CD4-positive, alpha-beta T cell (primary cell): ENCODE measurements at regions of chr2 and their contacts with region 1.

Region 1: DNA sequence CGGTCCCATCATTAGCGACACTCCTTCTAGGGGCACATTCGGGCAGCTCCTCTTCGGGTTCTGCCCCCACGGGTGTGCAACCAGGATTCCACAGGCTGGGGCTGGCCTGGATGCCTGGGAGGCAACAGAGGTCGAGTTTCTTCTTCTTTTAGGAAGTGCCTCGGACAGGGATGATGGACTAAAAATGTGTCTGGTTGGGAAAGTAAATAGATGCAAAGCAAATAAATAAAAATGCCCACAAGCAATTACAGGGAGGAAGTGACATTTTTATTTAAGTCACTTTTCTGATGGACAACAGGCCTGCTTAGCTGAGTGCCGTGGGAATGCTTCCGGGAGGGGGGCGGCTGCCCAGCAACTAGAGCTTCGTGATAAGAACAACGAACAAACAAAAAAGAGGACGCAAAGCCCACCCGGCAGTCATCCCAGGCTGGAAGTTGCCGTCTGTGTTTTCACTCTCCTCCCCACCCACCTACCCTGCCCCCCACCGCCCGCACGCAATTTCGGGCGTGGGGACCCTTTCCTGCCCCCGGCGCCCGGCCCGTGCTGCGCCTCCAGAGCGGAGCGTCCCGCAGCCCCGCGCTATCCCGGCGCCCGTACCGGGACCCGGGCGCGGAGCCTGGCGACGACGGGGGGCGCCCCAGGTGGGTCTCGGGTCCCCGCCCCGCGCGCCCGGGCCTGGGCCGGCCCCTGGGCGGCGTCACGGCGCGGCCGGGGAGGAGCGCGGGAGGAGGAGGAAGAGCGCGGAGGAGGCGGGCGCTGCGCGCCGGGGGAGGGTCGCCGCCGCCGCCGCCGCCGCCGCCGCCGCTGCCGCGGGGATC is 412 bp upstream of the NCK2 start:
- DNase-seq: peak; percentile 48 to 89 (median 68)
- ATAC-seq: peak; percentile 71
- H3K4me3 ChIP-seq: peak overlapping the region; percentile 58
- H3K4me3 Mint-ChIP-seq: peak overlapping the region; percentile 90
- H3K27ac ChIP-seq: peak overlapping the region; percentile 41 to 68
- H3K27ac Mint-ChIP-seq: peak overlapping the region; percentile 96
- H3K4me1 ChIP-seq: peaks cover 72% of the 10 kb centered on the region
- H3K4me1 Mint-ChIP-seq: peaks cover 87% of the 10 kb centered on the region
- H3K27me3 ChIP-seq: no peaks in the 10 kb centered on the region
- H3K27me3 Mint-ChIP-seq: no peaks in the 10 kb centered on the region
- CTCF ChIP-seq: no peak

Region 2: GRCh38 chr2:105595536-105595935 is 148.8 kb before region 1 on chr2:
- CTCF ChIA-PET with region 1: no interaction called
- POLR2A ChIA-PET with region 1: no interaction called
- intact Hi-C with region 1: no loop called
- DNase-seq: no peak
- ATAC-seq: no peak
- H3K4me3 ChIP-seq: no peak overlapping the region
- H3K4me3 Mint-ChIP-seq: no peak overlapping the region
- H3K27ac ChIP-seq: no peak overlapping the region
- H3K27ac Mint-ChIP-seq: no peak overlapping the region
- H3K4me1 ChIP-seq: peaks cover 9% of the 10 kb centered on the region
- H3K4me1 Mint-ChIP-seq: peaks cover 28% of the 10 kb centered on the region
- H3K27me3 ChIP-seq: no peaks in the 10 kb centered on the region
- H3K27me3 Mint-ChIP-seq: no peaks in the 10 kb centered on the region
- CTCF ChIP-seq: no peak

Region 3: GRCh38 chr2:105761931-105762515 is 17.7 kb after region 1 on chr2:
- CTCF ChIA-PET with region 1: interaction called, 5 read pairs
- POLR2A ChIA-PET with region 1: interaction called, 52 read pairs
- intact Hi-C with region 1: no loop called
- DNase-seq: no peak
- ATAC-seq: no peak
- H3K4me3 ChIP-seq: peak overlapping the region; percentile 17
- H3K4me3 Mint-ChIP-seq: peak overlapping the region; percentile 58
- H3K27ac ChIP-seq: peak overlapping the region; percentile 22 to 44
- H3K27ac Mint-ChIP-seq: peak overlapping the region; percentile 98
- H3K4me1 ChIP-seq: peaks cover 87% of the 10 kb centered on the region
- H3K4me1 Mint-ChIP-seq: peaks cover 98% of the 10 kb centered on the region
- H3K27me3 ChIP-seq: no peaks in the 10 kb centered on the region
- H3K27me3 Mint-ChIP-seq: no peaks in the 10 kb centered on the region
- CTCF ChIP-seq: no peak

Region 4: DNA sequence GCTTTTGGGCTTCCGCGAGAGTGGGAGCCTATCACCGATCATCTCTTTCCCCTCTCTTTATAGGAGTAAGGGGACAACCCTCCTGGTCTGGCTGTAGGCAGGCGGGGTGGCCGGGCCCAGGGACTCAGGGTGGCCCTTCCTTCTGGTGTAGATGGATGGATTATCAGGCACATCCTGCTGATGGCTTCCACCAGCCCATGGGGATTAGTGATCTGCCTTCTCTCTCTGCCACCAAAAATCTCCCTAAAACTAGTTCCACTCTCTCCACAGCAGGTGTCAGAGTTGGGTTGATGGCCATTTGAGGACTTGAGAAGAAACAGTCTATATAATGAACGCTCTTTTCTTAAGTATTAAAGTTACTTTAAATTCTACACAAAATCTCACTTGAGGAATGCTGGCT is 37.8 kb after region 1 on chr2:
- CTCF ChIA-PET with region 1: interaction called, 8 read pairs
- POLR2A ChIA-PET with region 1: interaction called, 33 read pairs
- intact Hi-C with region 1: no loop called
- DNase-seq: peak in 3 of 14 experiments; percentile 42 to 73 (median 69)
- ATAC-seq: peak; percentile 56
- H3K4me3 ChIP-seq: no peak overlapping the region
- H3K4me3 Mint-ChIP-seq: peak overlapping the region; percentile 81
- H3K27ac ChIP-seq: peak overlapping the region in 1 of 2 donors; percentile 47
- H3K27ac Mint-ChIP-seq: peak overlapping the region; percentile 98
- H3K4me1 ChIP-seq: peaks cover 96% of the 10 kb centered on the region
- H3K4me1 Mint-ChIP-seq: peaks cover 97% of the 10 kb centered on the region
- H3K27me3 ChIP-seq: no peaks in the 10 kb centered on the region
- H3K27me3 Mint-ChIP-seq: no peaks in the 10 kb centered on the region
- CTCF ChIP-seq: peak; percentile 52

Region 5: DNA sequence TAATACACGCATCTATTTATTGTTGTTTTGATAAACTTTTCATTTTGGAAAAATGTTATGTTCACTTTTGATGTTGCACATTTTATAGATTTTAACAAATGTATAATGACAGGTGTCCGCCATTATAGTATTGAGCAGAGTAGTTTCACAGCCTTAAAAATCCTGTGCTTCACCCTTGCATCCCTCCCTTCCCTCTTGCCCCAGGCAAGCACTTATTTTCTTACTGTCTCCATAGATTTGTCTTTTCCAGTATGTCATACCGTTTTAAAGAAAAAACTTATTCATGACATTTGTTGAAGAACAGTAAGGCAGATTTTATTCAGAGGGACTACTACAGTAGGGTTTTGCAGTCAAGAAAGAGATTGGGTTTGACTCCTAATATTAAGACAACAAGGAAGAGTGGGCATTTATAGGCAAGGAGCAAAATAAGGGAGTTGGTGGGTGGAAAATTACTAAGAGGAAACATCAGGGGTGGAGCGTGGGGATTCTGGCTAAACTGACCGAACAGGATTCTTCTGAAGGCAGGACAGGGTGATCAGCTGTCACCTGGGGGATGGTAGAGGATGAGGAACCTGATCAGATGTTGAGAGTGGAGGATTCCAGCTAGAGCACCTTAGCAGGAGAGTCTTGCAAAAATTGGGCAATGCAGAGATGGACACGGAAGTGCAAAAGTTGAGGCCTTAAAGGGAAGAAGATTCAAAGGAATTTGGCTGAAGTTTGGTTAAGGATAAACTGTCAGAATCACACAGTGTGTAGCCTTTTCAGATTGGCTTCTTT is 109.2 kb after region 1 on chr2:
- CTCF ChIA-PET with region 1: no interaction called
- POLR2A ChIA-PET with region 1: interaction called, 3 read pairs
- intact Hi-C with region 1: loop called (anchors 5 kb)
- DNase-seq: no peak
- ATAC-seq: no peak
- H3K4me3 ChIP-seq: no peak overlapping the region
- H3K4me3 Mint-ChIP-seq: peak overlapping the region; percentile 11
- H3K27ac ChIP-seq: peak overlapping the region; percentile 21 to 38
- H3K27ac Mint-ChIP-seq: peak overlapping the region; percentile 97
- H3K4me1 ChIP-seq: peaks cover 69% of the 10 kb centered on the region
- H3K4me1 Mint-ChIP-seq: peaks cover 90% of the 10 kb centered on the region
- H3K27me3 ChIP-seq: no peaks in the 10 kb centered on the region
- H3K27me3 Mint-ChIP-seq: no peaks in the 10 kb centered on the region
- CTCF ChIP-seq: no peak

Region 6: DNA sequence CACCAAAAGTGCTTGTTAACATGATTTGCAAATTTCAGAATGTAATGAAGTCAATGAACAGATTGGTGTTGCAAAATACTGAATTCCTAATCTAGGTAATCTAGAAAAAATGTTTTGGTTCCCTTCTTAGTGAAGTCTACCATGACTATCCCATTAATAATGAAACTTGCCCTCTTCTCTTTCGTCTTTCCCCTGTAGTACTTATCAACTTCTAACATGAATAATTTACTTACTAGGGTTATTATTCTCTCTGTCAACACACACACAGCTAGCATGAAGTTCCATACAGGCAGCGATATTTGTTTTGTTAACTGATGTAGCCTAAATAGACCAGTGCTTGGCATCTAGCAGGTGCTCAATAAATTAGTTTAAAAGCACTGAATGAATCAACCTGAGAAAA is 160.6 kb after region 1 on chr2:
- CTCF ChIA-PET with region 1: no interaction called
- POLR2A ChIA-PET with region 1: no interaction called
- intact Hi-C with region 1: loop called in 1 of 2 experiments (anchors 5 kb)
- DNase-seq: no peak
- ATAC-seq: no peak
- H3K4me3 ChIP-seq: no peak overlapping the region
- H3K4me3 Mint-ChIP-seq: no peak overlapping the region
- H3K27ac ChIP-seq: no peak overlapping the region
- H3K27ac Mint-ChIP-seq: no peak overlapping the region
- H3K4me1 ChIP-seq: peaks cover 35% of the 10 kb centered on the region
- H3K4me1 Mint-ChIP-seq: peaks cover 67% of the 10 kb centered on the region
- H3K27me3 ChIP-seq: no peaks in the 10 kb centered on the region
- H3K27me3 Mint-ChIP-seq: no peaks in the 10 kb centered on the region
- CTCF ChIP-seq: no peak